ENCODE measurements at regions of chr7 and their contacts with region 1.

Region 1: DNA sequence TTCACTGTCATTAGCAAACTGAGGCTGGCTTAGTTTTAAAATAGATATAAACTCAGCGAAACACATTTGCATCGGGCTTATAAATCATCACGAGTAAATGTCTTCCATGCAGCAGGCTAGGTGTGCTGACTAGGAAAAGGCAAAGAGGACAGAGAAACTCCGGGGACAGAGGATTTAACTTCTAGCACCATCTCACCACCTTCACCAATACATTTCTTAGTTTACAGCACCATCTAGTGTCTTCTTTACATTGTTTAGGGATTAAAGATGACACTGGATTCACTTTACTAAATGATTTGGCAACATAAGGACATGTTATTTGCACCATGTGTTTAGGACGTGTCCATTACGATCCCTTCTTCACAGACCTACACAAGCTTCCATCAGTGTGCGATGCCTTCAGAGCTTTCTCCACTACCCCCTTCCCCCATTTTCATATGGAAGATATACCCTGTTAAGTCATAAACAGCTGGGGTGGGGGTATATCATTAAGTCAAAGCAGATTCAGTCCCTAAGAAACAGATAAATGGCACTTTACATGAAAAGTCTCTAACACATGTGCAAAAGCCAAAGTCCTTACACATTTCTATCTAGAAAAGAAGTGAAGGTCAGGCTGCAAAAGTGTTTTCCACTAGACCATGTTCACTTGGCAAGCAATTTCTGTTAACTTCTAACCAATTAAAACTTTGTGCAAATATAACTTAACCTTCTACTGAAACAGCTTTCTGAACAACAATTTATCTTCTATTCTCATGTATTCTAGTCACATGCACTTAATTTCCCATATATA is 103.3 kb downstream of the GRB10 start:
- DNase-seq: peak in 2 of 9 experiments; percentile 63 to 75
- ATAC-seq: peak; percentile 67
- H3K4me3 ChIP-seq: no peak overlapping the region
- H3K4me3 Mint-ChIP-seq: no peak overlapping the region
- H3K27ac ChIP-seq: no peak overlapping the region
- H3K27ac Mint-ChIP-seq: no peak overlapping the region
- H3K4me1 ChIP-seq: no peaks in the 10 kb centered on the region
- H3K4me1 Mint-ChIP-seq: peaks cover 2% of the 10 kb centered on the region
- H3K27me3 ChIP-seq: no peaks in the 10 kb centered on the region
- H3K27me3 Mint-ChIP-seq: peaks cover 5% of the 10 kb centered on the region
- CTCF ChIP-seq: peak; percentile 68

Region 2: GRCh38 chr7:50142425-50143017 is 536.9 kb before region 1 on chr7:
- CTCF ChIA-PET with region 1: interaction called, 5 read pairs
- POLR2A ChIA-PET with region 1: no interaction called
- intact Hi-C with region 1: loop called (anchors 1 kb)
- DNase-seq: peak in 4 of 9 experiments; percentile 38 to 78 (median 59)
- ATAC-seq: peak; percentile 85
- H3K4me3 ChIP-seq: no peak overlapping the region
- H3K4me3 Mint-ChIP-seq: peak overlapping the region; percentile 57
- H3K27ac ChIP-seq: no peak overlapping the region
- H3K27ac Mint-ChIP-seq: peak overlapping the region; percentile 84
- H3K4me1 ChIP-seq: peaks cover 5% of the 10 kb centered on the region
- H3K4me1 Mint-ChIP-seq: peaks cover 15% of the 10 kb centered on the region
- H3K27me3 ChIP-seq: no peaks in the 10 kb centered on the region
- H3K27me3 Mint-ChIP-seq: no peaks in the 10 kb centered on the region
- CTCF ChIP-seq: peak; percentile 91

Region 3: DNA sequence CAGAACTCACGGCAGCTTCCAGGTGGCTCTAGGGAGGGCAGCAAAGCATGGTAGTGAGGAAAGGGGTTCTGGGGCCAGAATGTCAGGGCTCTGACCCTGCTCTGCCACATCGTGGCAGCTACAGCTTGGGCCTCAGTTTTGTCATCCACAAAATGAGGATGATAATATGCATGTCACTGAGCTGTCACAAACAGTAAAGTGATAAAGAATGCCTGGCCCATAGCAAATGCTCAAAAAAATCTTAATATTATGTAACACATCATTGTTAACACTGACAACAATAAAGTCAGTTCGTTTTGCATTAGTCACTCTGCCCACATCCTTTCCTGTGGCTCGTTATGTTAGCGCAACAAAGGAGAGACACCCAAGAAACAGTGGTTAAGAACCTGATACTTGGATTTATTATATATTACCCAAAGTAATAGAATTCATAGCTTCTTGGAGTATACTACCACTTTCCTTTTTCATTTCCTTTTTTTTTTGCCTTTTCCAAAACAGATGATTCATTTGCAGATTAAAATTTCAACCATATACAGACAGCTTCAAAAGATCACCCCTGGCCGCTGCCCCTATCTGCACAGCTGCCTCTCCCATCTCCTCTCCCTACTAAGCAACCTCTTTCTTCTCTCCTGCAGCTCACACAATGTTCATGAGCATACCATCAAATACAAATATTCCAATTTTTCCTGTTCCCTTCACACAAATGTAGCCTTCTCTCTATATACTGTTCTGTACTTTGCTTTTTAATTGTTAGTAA is 68.7 kb before region 1 on chr7:
- CTCF ChIA-PET with region 1: interaction called, 8 read pairs
- POLR2A ChIA-PET with region 1: no interaction called
- intact Hi-C with region 1: loop called (anchors 1 to 2 kb)
- DNase-seq: peak; percentile 17 to 81 (median 60)
- ATAC-seq: peak; percentile 84
- H3K4me3 ChIP-seq: no peak overlapping the region
- H3K4me3 Mint-ChIP-seq: peak overlapping the region; percentile 21
- H3K27ac ChIP-seq: peak overlapping the region; percentile 39 to 53
- H3K27ac Mint-ChIP-seq: peak overlapping the region; percentile 68
- H3K4me1 ChIP-seq: peaks cover 18% of the 10 kb centered on the region
- H3K4me1 Mint-ChIP-seq: peaks cover 39% of the 10 kb centered on the region
- H3K27me3 ChIP-seq: no peaks in the 10 kb centered on the region
- H3K27me3 Mint-ChIP-seq: no peaks in the 10 kb centered on the region
- CTCF ChIP-seq: no peak

Region 4: GRCh38 chr7:50661345-50662040 is 17.9 kb before region 1 on chr7:
- CTCF ChIA-PET with region 1: interaction called, 12 read pairs
- POLR2A ChIA-PET with region 1: no interaction called
- intact Hi-C with region 1: no loop called
- DNase-seq: peak in 5 of 9 experiments; percentile 20 to 64 (median 37)
- ATAC-seq: no peak
- H3K4me3 ChIP-seq: no peak overlapping the region
- H3K4me3 Mint-ChIP-seq: peak overlapping the region; percentile 55
- H3K27ac ChIP-seq: peak overlapping the region in 1 of 2 experiments; percentile 57
- H3K27ac Mint-ChIP-seq: peak overlapping the region; percentile 79
- H3K4me1 ChIP-seq: peaks cover 42% of the 10 kb centered on the region
- H3K4me1 Mint-ChIP-seq: peaks cover 49% of the 10 kb centered on the region
- H3K27me3 ChIP-seq: no peaks in the 10 kb centered on the region
- H3K27me3 Mint-ChIP-seq: no peaks in the 10 kb centered on the region
- CTCF ChIP-seq: no peak

Measured in CD8-positive, alpha-beta T cell (primary cell).